ENCODE measurements at regions of chrX and their contacts with region 1.

Region 1: GRCh38 chrX:17590892-17591740 is 146.2 kb upstream of the SCML1 start:
- DNase-seq: no peak
- ATAC-seq: peak; percentile 90
- H3K4me3 ChIP-seq: no peak overlapping the region
- H3K27ac ChIP-seq: no peak overlapping the region
- H3K4me1 ChIP-seq: no peaks in the 10 kb centered on the region
- H3K27me3 ChIP-seq: no peaks in the 10 kb centered on the region
- CTCF ChIP-seq: peak; percentile 70 to 74 (median 72)
- EP300 ChIP-seq: no peak
- POLR2A ChIP-seq: no peak
- RAD21 ChIP-seq: peak; percentile 70

Region 2: DNA sequence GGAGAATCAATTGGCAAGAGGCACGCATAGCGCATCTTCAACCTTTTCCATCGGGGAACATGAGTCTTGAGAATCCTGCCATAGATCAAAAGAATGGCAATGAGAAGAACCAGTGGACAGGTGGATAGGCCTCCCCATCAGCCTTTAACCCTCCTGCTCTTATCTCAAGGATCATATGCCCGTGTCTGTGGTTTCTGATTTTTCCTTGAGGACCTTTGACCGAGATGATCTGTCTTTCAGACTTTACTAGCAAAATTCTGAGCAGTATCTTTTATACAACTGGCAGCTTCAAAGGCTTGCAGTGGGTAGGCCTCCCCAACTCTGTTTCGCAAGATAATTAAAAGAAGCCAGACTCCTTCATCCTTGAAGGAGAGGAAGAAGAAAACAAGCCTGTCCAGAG is 470.3 kb before region 1 on chrX:
- CTCF ChIA-PET with region 1: interaction called, 4 read pairs
- POLR2A ChIA-PET with region 1: no interaction called
- RAD21 ChIA-PET with region 1: no interaction called
- SMC1A ChIA-PET with region 1: interaction called, 4 read pairs
- in situ Hi-C with region 1: no loop called
- intact Hi-C with region 1: loop called (anchors 5 kb)
- DNase-seq: no peak
- ATAC-seq: no peak
- H3K4me3 ChIP-seq: no peak overlapping the region
- H3K27ac ChIP-seq: no peak overlapping the region
- H3K4me1 ChIP-seq: no peaks in the 10 kb centered on the region
- H3K27me3 ChIP-seq: no peaks in the 10 kb centered on the region
- CTCF ChIP-seq: no peak
- EP300 ChIP-seq: no peak
- POLR2A ChIP-seq: no peak
- RAD21 ChIP-seq: no peak

Region 3: GRCh38 chrX:17242470-17242869 is 348.6 kb before region 1 on chrX:
- CTCF ChIA-PET with region 1: interaction called, 47 read pairs
- POLR2A ChIA-PET with region 1: no interaction called
- RAD21 ChIA-PET with region 1: interaction called, 8 read pairs
- SMC1A ChIA-PET with region 1: interaction called, 7 read pairs
- in situ Hi-C with region 1: loop called (anchors 5 kb)
- intact Hi-C with region 1: loop called (anchors 1 kb)
- DNase-seq: no peak
- ATAC-seq: peak; percentile 81
- H3K4me3 ChIP-seq: no peak overlapping the region
- H3K27ac ChIP-seq: no peak overlapping the region
- H3K4me1 ChIP-seq: no peaks in the 10 kb centered on the region
- H3K27me3 ChIP-seq: no peaks in the 10 kb centered on the region
- CTCF ChIP-seq: peak; percentile 68 to 74 (median 72)
- EP300 ChIP-seq: no peak
- POLR2A ChIP-seq: no peak
- RAD21 ChIP-seq: peak; percentile 66

Region 4: GRCh38 chrX:17459008-17459611 is 132.0 kb before region 1 on chrX:
- CTCF ChIA-PET with region 1: no interaction called
- POLR2A ChIA-PET with region 1: no interaction called
- RAD21 ChIA-PET with region 1: no interaction called
- SMC1A ChIA-PET with region 1: no interaction called
- in situ Hi-C with region 1: no loop called
- intact Hi-C with region 1: no loop called
- DNase-seq: no peak
- ATAC-seq: no peak
- H3K4me3 ChIP-seq: no peak overlapping the region
- H3K27ac ChIP-seq: no peak overlapping the region
- H3K4me1 ChIP-seq: no peaks in the 10 kb centered on the region
- H3K27me3 ChIP-seq: no peaks in the 10 kb centered on the region
- CTCF ChIP-seq: no peak
- EP300 ChIP-seq: no peak
- POLR2A ChIP-seq: no peak
- RAD21 ChIP-seq: no peak

Region 5: DNA sequence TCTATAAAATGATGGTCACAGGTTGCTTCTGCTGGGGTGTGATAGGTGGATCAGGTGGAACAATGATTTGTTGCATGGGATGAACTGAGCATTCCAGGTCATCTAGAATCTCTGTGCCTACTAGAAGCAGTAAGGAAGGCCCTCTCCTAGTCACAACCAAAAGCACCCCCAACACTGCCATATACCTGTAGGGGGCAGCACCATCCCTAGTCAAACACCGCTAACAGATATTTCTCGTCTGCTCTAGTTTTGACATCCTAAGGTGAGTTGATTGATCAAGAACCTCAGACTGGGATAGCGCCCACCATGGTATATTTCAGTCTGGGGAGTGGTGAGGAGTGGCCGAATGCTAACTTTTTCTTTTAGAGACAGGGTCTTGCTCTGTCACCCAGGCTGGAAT is 55.9 kb before region 1 on chrX:
- CTCF ChIA-PET with region 1: interaction called, 10 read pairs
- POLR2A ChIA-PET with region 1: no interaction called
- RAD21 ChIA-PET with region 1: no interaction called
- SMC1A ChIA-PET with region 1: interaction called, 6 read pairs
- in situ Hi-C with region 1: no loop called
- intact Hi-C with region 1: loop called (anchors 1 kb)
- DNase-seq: no peak
- ATAC-seq: peak; percentile 80
- H3K4me3 ChIP-seq: no peak overlapping the region
- H3K27ac ChIP-seq: no peak overlapping the region
- H3K4me1 ChIP-seq: no peaks in the 10 kb centered on the region
- H3K27me3 ChIP-seq: no peaks in the 10 kb centered on the region
- CTCF ChIP-seq: peak; percentile 44 to 53 (median 48); a peak in 5 of 6 replicates
- EP300 ChIP-seq: no peak
- POLR2A ChIP-seq: no peak
- RAD21 ChIP-seq: peak; percentile 62

Region 6: DNA sequence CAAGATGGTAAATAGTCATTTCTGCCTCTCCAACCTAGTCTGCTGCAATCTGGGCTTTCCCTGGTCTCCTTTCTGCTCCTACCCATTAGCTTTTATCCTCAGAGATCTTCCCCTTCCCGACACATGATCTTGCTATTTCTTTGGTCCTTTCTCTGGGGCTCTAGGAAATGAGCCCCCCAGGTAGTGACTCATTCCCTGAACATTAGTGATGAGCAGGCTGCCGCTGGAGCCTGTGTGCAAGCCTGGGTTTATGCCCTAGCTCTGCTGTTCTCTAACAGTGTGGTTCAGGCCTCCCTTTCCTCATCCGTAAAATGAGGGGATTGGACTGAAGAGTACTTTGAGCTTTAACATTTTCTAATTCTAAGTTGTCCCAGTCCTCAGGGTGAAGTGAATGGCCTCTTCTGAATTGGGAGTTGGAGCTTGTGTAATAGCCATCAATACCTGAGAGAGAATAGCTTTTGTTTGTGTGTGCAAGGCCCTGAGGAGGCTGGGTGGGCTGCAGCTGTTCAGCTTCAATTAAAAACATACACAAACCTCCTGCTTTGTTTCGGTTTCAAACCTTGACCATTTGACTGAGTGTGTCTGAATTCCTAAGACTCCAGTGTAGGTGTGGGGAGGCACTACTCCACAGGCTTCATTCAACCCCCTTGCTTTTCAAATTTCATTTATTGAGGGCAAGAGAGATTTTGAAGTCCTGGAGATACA is 30.6 kb after region 1 on chrX:
- CTCF ChIA-PET with region 1: no interaction called
- POLR2A ChIA-PET with region 1: no interaction called
- RAD21 ChIA-PET with region 1: no interaction called
- SMC1A ChIA-PET with region 1: no interaction called
- in situ Hi-C with region 1: no loop called
- intact Hi-C with region 1: no loop called
- DNase-seq: no peak
- ATAC-seq: no peak
- H3K4me3 ChIP-seq: no peak overlapping the region
- H3K27ac ChIP-seq: no peak overlapping the region
- H3K4me1 ChIP-seq: no peaks in the 10 kb centered on the region
- H3K27me3 ChIP-seq: no peaks in the 10 kb centered on the region
- CTCF ChIP-seq: no peak
- EP300 ChIP-seq: no peak
- POLR2A ChIP-seq: no peak
- RAD21 ChIP-seq: no peak

Region 7: DNA sequence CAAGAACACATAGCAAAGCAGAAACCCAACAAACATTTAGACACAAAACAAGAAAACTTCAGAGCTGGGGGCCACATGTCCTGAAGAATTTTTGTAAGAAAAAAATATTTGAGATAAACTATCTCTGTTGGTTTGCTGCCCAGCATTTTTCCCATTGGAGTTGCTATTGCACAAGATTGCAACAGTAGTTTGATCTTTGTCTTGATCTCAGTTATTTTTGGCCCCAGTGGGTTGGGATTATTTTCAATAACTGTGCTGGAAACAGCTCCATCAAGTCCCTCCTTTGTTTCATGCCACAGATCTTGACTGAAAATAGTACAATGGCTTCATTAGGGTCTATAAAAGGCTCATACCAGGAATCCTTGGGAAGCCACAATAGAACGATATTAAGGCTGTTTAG is 373.8 kb after region 1 on chrX:
- CTCF ChIA-PET with region 1: no interaction called
- POLR2A ChIA-PET with region 1: no interaction called
- RAD21 ChIA-PET with region 1: no interaction called
- SMC1A ChIA-PET with region 1: no interaction called
- in situ Hi-C with region 1: no loop called
- intact Hi-C with region 1: no loop called
- DNase-seq: no peak
- ATAC-seq: no peak
- H3K4me3 ChIP-seq: no peak overlapping the region
- H3K27ac ChIP-seq: no peak overlapping the region
- H3K4me1 ChIP-seq: no peaks in the 10 kb centered on the region
- H3K27me3 ChIP-seq: no peaks in the 10 kb centered on the region
- CTCF ChIP-seq: no peak
- EP300 ChIP-seq: no peak
- POLR2A ChIP-seq: no peak
- RAD21 ChIP-seq: no peak